Sciatic nerve (tissue), 2 donors: ENCODE measurements at regions of chr15 and their contacts with region 1.

Region 1: GRCh38 chr15:63093486-63094205 is 28.0 kb upstream of the LACTB start:
- DNase-seq: peak; percentile 91
- ATAC-seq: peak; percentile 91

Region 2: DNA sequence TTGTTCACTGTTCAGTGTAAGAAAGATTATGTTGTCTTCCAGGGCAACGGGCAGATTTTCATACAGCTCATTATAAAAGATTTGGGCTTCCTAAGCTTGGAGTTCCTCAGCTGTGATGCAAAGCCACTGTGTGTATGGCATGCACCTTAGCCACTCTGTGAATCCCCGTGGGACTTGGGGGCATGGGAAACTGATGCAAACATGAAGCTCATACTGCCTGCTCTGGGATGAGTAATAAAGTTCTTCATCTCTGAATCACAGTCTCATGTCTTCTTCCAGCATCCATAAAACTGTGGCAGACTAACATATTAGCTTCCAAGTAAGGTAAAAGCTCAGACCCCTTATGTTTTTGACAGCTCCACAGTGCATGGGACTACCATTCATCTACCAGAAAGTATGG is 1710.2 kb before region 1 on chr15:
- intact Hi-C with region 1: no loop called
- DNase-seq: no peak
- ATAC-seq: no peak

Region 3: DNA sequence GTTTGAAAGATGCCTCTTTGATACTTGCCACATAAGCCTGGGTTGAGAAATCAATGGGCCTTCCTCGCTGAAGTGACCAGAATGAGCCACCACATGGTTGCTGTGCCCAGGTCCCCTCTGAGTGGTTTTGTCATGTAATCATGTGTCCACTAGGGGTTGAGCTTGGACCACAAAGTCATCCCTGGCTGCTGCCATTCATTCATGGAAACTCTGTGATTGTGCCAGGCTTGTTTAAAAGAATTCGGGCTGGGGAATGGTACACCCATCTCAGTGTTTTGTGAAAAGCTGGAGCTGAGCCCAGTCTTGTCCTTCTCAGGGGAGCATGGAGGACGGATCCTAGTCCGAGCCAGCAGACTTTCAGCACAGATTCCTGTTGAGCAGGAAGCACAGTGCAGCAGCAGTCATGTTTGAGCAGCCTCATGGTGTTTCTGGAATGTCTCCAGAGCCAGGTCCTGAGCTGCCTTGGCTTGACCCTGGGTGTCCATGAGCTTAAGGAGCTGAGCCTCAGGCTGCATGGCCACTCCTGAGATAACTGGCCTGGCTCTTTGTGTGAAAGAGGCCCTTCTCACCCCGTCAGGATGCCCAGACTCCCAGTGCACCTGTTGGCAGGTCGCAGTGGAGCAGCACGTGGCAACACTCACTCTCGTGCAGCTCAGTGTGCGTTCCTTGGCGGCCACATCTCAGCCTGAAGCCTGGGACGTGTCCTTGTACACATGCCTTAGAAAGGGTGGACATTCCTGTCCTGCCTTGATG is 311.4 kb before region 1 on chr15:
- intact Hi-C with region 1: loop called (anchors 10 kb)
- DNase-seq: peak; percentile 84
- ATAC-seq: peak; percentile 85

Region 4: GRCh38 chr15:62847900-62848489 is 245.7 kb before region 1 on chr15:
- intact Hi-C with region 1: loop called (anchors 10 kb)
- DNase-seq: peak; percentile 87
- ATAC-seq: peak; percentile 78

Region 5: GRCh38 chr15:63048115-63048775 is 45.4 kb before region 1 on chr15:
- intact Hi-C with region 1: loop called (anchors 5 kb)
- DNase-seq: peak; percentile 94
- ATAC-seq: peak; percentile 86